Right ventricle myocardium inferior (tissue), 1 donor: ENCODE measurements at regions of chr2 and their contacts with region 1.

Region 1: DNA sequence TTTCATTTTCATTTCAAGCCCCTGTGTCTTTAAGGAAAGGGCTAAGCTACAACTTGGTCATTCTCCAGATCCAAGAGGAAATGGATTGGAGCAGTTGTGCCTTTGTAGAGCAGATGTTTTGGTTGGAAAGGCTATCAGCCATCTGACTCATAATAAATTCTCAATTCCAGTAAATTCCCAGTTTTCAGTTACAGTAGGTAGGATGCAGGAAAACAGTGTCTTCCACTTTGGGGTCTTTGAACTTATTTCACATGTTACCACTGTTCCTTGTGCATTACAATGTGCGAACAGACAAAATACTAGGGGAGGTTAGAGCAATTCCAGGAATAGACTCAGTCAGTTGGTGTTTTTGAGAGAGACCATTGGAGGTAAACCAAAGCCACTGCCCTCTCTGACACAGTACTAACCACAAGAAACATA is 211.9 kb downstream of the BABAM2 start:
- DNase-seq: no peak
- ATAC-seq: peak; percentile 84

Region 2: DNA sequence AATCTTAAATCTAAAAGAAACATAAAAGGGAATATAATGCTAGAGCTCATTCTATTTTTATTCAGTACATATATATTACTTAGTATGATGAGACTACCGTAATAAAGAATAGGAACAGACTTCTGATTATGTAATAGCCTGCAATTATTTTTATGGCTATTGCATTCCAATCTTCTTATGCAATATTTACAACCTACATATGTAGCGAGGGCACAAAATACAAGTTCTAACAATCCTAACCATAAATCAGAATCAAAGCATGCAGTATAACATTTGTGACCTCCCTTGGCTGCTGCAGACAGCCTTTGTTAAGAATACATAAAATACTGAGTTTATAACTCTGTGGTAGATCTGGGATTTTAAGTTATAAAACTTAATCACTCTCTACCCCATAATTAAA is 34.4 kb before region 1 on chr2:
- intact Hi-C with region 1: no loop called
- DNase-seq: no peak
- ATAC-seq: no peak

Region 3: DNA sequence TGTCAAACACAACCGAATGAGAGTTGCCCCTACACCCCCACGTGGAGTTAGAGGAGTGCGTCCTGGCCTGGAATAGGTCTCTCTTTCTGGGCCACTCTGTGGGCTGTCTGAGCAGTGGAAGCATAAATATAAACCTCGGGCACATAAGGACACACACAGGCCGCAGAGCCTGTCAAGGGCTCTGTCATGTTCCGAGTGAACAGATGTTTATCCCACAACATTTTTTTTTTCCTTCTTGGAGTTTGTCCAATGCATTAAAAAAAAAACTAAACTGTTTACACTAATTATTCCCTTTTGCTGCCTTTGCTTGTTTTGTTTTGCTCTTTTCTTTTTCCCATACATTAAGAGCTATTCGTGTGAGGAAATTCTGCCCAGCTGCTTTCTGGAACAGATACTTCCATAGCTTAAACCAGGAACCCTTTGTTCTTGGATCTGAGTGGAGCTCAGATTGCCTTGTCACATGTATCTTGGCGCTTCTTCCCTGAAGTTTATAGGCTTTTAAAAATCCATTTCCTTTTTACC is 61.9 kb after region 1 on chr2:
- intact Hi-C with region 1: loop called (anchors 2 kb)
- DNase-seq: peak; percentile 57
- ATAC-seq: peak; percentile 95